Activated CD4-positive, alpha-beta memory T cell treated with anti-CD3 and anti-CD28 coated beads, Interleukin-2, amount 10 ng/mL, durations not matched to agents 7 days and 5 days (primary cell): ENCODE measurements at regions of chr18 and their contacts with region 1.

Region 1: DNA sequence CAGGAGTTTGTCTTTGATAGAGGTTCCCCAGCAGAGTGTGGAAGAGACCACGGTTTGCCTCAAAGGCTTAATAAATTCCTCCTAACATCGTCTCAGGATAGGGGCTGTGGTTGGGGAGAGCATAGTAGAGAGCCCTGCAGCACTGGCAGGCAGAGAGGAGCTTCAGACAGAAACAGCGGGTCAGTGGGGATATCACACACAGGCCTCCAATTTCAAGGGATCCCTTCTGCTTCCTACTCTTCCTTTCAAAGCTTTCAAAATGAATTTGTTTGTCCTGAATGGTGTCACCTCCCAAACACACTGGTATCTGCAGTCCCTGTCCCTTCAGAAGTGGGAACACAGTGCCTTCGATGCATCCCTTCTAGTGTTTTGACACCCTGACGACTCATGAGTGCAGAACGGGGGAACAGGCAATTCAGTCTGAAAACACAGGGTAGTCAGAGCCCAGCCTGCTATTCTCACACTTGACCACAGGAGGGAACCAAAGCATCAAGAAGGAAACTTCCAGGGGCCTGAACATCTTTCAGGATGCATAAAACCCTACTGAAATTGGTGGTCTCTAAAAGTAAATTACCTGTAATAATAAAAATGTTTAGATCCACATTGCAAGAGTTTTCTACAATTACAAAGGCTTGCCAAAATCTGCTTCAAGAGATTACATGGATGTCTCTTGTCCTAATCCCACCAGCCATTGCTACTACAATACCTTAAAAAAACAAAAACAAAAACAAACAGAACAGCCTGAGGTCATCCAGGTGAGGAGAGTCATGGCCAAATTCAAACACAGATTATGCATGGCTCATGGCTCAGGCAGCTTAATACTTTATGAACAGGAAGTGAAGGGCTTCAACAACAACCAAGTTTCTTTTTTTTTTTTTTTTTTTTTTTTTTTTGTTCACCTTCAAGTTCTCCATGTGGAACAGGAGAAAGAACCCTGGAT is 49.8 kb downstream of the SLC14A2 start:
- DNase-seq: peak; percentile 70
- H3K4me3 Mint-ChIP-seq: no peak overlapping the region
- H3K27ac Mint-ChIP-seq: peak overlapping the region; percentile 76
- H3K4me1 Mint-ChIP-seq: peaks cover 50% of the 10 kb centered on the region
- H3K27me3 Mint-ChIP-seq: peaks cover 3% of the 10 kb centered on the region

Region 2: DNA sequence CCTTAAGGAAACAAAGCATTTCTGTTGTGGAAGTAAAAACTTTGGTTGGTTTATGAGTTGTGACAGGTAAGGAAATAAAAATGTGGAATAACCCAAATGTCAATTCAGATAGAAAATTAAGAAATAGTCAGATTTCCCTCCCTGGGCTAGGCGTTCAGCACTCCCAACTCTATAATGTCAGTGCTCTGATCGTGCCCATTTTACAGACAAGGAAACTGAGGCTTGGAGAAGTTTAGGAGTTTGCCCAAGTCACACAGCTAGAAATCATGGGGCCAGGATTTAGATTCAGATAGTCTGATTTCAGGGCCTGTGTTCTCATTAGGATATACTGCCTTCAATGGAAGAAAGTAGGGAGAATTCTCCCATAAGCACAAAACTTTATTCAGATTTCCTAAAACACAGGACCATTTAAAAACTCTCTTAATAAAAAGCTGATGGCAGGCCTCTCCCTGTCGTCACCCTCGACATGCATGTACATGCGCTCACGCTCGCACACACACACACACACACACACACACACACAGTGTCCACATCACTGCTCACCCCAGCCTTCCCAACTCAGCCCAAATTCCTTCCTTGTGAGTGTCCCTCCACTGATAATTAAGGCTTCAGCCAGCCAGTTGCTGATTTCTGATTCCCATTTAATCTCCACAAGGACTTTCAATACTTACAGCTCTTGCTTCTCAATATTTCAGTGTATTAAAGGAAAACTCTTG is 98.9 kb before region 1 on chr18:
- CTCF ChIA-PET with region 1: no interaction called
- POLR2A ChIA-PET with region 1: no interaction called
- DNase-seq: no peak
- H3K4me3 Mint-ChIP-seq: no peak overlapping the region
- H3K27ac Mint-ChIP-seq: no peak overlapping the region
- H3K4me1 Mint-ChIP-seq: no peaks in the 10 kb centered on the region
- H3K27me3 Mint-ChIP-seq: no peaks in the 10 kb centered on the region

Region 3: GRCh38 chr18:45652303-45653080 is 12.6 kb before region 1 on chr18:
- CTCF ChIA-PET with region 1: interaction called, 15 read pairs
- POLR2A ChIA-PET with region 1: interaction called, 4 read pairs
- DNase-seq: no peak
- H3K4me3 Mint-ChIP-seq: no peak overlapping the region
- H3K27ac Mint-ChIP-seq: no peak overlapping the region
- H3K4me1 Mint-ChIP-seq: peaks cover 3% of the 10 kb centered on the region
- H3K27me3 Mint-ChIP-seq: peaks cover 16% of the 10 kb centered on the region

Region 4: DNA sequence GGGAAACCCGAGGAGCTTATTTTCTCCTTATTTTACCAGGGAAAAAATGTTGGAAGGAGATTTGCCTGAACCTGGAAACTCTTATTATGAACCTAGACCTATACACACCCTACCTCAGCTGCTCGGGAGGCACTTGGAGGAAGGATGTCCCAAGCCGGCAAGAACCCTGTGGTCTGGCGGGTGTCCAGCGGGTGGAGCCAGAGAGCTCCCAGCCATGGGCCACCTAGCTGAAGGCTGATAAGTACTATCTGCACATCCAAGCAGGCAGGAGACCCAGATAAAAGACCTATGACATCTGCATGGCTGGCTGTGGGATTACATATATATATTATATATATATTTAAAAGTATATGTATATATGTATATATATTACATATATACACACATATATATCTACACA is 57.8 kb after region 1 on chr18:
- CTCF ChIA-PET with region 1: interaction called, 50 read pairs
- POLR2A ChIA-PET with region 1: no interaction called
- DNase-seq: peak; percentile 76
- H3K4me3 Mint-ChIP-seq: no peak overlapping the region
- H3K27ac Mint-ChIP-seq: no peak overlapping the region
- H3K4me1 Mint-ChIP-seq: peaks cover 1% of the 10 kb centered on the region
- H3K27me3 Mint-ChIP-seq: peaks cover 11% of the 10 kb centered on the region

Region 5: GRCh38 chr18:45755934-45756333 is 90.8 kb after region 1 on chr18:
- CTCF ChIA-PET with region 1: no interaction called
- POLR2A ChIA-PET with region 1: no interaction called
- DNase-seq: no peak
- H3K4me3 Mint-ChIP-seq: no peak overlapping the region
- H3K27ac Mint-ChIP-seq: no peak overlapping the region
- H3K4me1 Mint-ChIP-seq: no peaks in the 10 kb centered on the region
- H3K27me3 Mint-ChIP-seq: peaks cover 15% of the 10 kb centered on the region

Region 6: GRCh38 chr18:45879681-45880655 is 214.9 kb after region 1 on chr18:
- CTCF ChIA-PET with region 1: interaction called, 159 read pairs
- POLR2A ChIA-PET with region 1: interaction called, 5 read pairs
- DNase-seq: peak; percentile 70
- H3K4me3 Mint-ChIP-seq: no peak overlapping the region
- H3K27ac Mint-ChIP-seq: no peak overlapping the region
- H3K4me1 Mint-ChIP-seq: peaks cover 11% of the 10 kb centered on the region
- H3K27me3 Mint-ChIP-seq: no peaks in the 10 kb centered on the region

Region 7: GRCh38 chr18:45974088-45974536 is 309.0 kb after region 1 on chr18:
- CTCF ChIA-PET with region 1: interaction called, 26 read pairs
- POLR2A ChIA-PET with region 1: interaction called, 5 read pairs
- DNase-seq: peak; percentile 75
- H3K4me3 Mint-ChIP-seq: no peak overlapping the region
- H3K27ac Mint-ChIP-seq: peak overlapping the region; percentile 22
- H3K4me1 Mint-ChIP-seq: peaks cover 7% of the 10 kb centered on the region
- H3K27me3 Mint-ChIP-seq: no peaks in the 10 kb centered on the region